ENCODE measurements at regions of chr12 and their contacts with region 1.

Region 1: GRCh38 chr12:10562306-10562933 is 51.0 kb downstream of the MAGOHB start:
- DNase-seq: no peak
- ATAC-seq: peak in 1 of 2 donors; percentile 18
- H3K4me3 ChIP-seq: no peak overlapping the region
- H3K27ac ChIP-seq: no peak overlapping the region
- H3K4me1 ChIP-seq: no peaks in the 10 kb centered on the region
- H3K27me3 ChIP-seq: no peaks in the 10 kb centered on the region
- CTCF ChIP-seq: peak; percentile 58 to 89 (median 68)
- POLR2A ChIP-seq: no peak

Region 2: DNA sequence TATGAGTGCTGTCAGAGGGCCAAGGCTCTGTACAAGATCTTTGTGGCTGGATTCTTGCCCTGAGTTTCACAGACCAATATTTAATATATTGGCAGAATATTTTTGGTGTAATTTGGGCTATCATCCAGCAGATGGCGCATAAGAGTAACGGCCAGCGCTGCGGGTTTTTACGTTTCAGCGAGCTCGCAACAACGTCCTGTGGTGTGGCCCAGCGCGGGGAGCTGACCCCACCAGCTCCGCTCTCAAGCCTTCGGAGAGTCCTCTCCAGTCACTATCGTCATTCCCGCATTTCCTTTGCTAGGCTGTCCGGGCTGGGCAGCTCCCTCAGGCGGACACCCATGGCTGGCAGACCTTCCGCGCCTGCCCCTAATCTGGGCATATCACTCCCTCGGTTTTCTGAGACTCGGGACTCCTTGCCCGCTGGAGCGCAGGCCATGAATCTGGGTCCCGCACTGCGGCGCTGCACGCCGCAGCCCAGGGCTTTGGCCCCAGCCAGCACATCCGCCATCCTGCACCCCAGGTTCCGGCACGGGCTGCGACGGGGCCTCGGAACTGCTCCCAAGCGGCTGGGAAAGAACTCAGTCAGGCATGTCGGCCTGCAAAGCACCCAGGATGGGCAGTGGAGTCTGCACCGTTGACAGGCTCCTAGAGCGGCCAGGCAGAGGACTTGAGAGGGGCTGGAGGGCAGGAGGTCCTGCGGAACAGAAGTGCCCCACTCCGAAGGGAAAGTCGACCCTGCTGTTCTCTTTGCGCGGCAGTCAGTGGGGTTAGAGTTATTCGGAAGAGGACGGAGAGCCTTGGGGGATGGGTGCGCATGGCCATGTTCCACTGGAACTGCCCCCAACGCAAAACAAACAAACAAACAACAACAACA is 408.9 kb before region 1 on chr12:
- in situ Hi-C with region 1: loop called in 1 of 4 experiments (anchors 10 kb)
- intact Hi-C with region 1: loop called (anchors 1 kb)
- DNase-seq: peak; percentile 40 to 64
- ATAC-seq: peak; percentile 92
- H3K4me3 ChIP-seq: peak overlapping the region; percentile 64 to 98 (median 70)
- H3K27ac ChIP-seq: peak overlapping the region; percentile 77 to 84 (median 81)
- H3K4me1 ChIP-seq: peaks cover 4 to 8% of the 10 kb centered on the region in 2 donors
- H3K27me3 ChIP-seq: no peaks in the 10 kb centered on the region
- CTCF ChIP-seq: peak; percentile 76 to 88 (median 83)
- POLR2A ChIP-seq: peak in 1 of 2 donors; percentile 14

Region 3: DNA sequence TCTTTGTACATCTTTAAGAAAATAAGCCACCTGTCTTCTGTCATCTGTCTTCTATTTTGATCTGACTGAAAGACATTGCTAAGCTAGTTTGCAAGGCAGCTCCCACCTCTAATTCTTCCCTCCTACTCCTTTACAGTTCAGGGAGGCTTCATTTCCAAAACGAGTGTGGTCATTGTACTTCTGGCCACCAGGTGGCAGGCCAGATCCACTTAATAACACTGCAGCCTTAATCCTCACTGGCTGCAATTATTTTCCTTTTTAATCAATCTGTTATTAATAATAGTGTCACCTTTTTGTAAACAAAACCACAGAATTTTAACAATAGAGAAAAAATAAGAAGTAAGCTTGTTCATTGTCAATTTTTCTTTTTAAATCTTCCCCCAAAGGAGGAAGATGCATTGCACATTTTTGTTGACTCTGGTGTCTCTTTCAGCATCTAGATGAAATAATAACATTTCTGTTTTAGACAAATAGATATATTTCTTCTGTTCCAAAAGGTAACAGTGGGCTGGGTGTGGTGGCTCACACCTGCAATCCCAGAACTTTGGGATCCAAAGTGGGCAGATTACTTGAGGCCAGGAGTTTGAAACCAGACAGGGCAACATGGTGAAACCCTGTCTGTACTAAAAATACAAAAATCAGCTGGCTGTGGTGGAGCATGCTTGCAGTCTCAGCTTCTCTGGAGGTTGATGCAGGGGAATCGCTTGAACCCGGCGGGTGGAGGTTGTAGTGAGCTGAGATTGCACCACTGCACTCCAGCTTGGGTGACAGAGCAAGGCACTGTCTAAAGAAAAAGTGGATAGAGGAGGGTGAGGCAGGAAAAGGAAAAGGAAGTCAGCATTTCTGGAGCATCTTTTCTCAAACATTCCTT is 326.4 kb before region 1 on chr12:
- in situ Hi-C with region 1: loop called (anchors 5 to 10 kb)
- intact Hi-C with region 1: loop called (anchors 1 kb)
- DNase-seq: no peak
- ATAC-seq: peak; percentile 70 to 76
- H3K4me3 ChIP-seq: no peak overlapping the region
- H3K27ac ChIP-seq: no peak overlapping the region
- H3K4me1 ChIP-seq: no peaks in the 10 kb centered on the region
- H3K27me3 ChIP-seq: no peaks in the 10 kb centered on the region
- CTCF ChIP-seq: peak; percentile 77 to 85 (median 84)
- POLR2A ChIP-seq: no peak

Region 4: GRCh38 chr12:10320643-10321042 is 241.8 kb before region 1 on chr12:
- in situ Hi-C with region 1: loop called (anchors 10 to 25 kb)
- intact Hi-C with region 1: no loop called
- DNase-seq: no peak
- ATAC-seq: no peak
- H3K4me3 ChIP-seq: no peak overlapping the region
- H3K27ac ChIP-seq: no peak overlapping the region
- H3K4me1 ChIP-seq: no peaks in the 10 kb centered on the region
- H3K27me3 ChIP-seq: no peaks in the 10 kb centered on the region
- CTCF ChIP-seq: no peak
- POLR2A ChIP-seq: no peak

Region 5: DNA sequence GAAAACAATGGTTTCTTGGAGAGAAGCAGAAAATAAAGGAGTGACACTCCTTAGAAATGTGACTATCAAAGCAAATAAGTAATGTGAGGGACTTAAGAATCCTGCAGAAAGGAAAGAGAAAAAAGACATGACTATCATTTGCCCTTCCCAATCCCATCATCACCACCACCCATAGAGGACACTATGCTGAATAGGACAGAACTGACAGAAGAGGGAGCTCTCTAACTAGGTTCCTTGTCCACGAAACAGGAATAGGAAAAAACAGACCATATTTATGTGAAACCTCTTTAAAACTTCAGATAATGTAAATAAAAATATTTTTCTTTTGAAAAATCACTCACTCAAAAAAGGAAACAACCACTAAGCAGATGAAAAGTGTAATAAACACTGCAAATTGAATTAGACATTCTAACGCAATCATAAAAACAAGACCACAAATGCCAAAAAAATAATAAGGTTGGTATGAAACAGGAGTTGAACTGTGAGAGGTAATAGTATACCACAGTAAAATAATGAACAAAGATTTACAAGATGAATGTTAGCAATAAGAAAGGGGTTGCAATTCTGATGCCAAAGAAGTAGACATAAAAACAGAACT is 230.7 kb before region 1 on chr12:
- in situ Hi-C with region 1: loop called (anchors 10 to 25 kb)
- intact Hi-C with region 1: loop called (anchors 1 kb)
- DNase-seq: no peak
- ATAC-seq: peak; percentile 45 to 78
- H3K4me3 ChIP-seq: no peak overlapping the region
- H3K27ac ChIP-seq: no peak overlapping the region
- H3K4me1 ChIP-seq: no peaks in the 10 kb centered on the region
- H3K27me3 ChIP-seq: no peaks in the 10 kb centered on the region
- CTCF ChIP-seq: peak in 4 of 5 experiments; percentile 41 to 67 (median 52)
- POLR2A ChIP-seq: no peak

Region 6: GRCh38 chr12:10385166-10385613 is 177.2 kb before region 1 on chr12:
- in situ Hi-C with region 1: no loop called
- intact Hi-C with region 1: no loop called
- DNase-seq: no peak
- ATAC-seq: no peak
- H3K4me3 ChIP-seq: no peak overlapping the region
- H3K27ac ChIP-seq: no peak overlapping the region
- H3K4me1 ChIP-seq: no peaks in the 10 kb centered on the region
- H3K27me3 ChIP-seq: no peaks in the 10 kb centered on the region
- CTCF ChIP-seq: no peak
- POLR2A ChIP-seq: no peak

Measured in gastrocnemius medialis (tissue), 4 donors.